Activated CD4-positive, alpha-beta memory T cell treated with anti-CD3 and anti-CD28 coated beads for 36 hours (primary cell): ENCODE measurements at regions of chr1 and their contacts with region 1.

Region 1: GRCh38 chr1:36576118-36576517 is 93.4 kb upstream of the CSF3R start:
- DNase-seq: peak; percentile 65
- H3K4me3 Mint-ChIP-seq: no peak overlapping the region
- H3K27ac Mint-ChIP-seq: no peak overlapping the region
- H3K4me1 Mint-ChIP-seq: no peaks in the 10 kb centered on the region
- H3K27me3 Mint-ChIP-seq: peaks cover 24% of the 10 kb centered on the region

Region 2: GRCh38 chr1:35788139-35788538 is 788.0 kb before region 1 on chr1:
- CTCF ChIA-PET with region 1: no interaction called
- POLR2A ChIA-PET with region 1: no interaction called
- intact Hi-C with region 1: no loop called
- DNase-seq: no peak
- H3K4me3 Mint-ChIP-seq: no peak overlapping the region
- H3K27ac Mint-ChIP-seq: no peak overlapping the region
- H3K4me1 Mint-ChIP-seq: no peaks in the 10 kb centered on the region
- H3K27me3 Mint-ChIP-seq: no peaks in the 10 kb centered on the region

Region 3: GRCh38 chr1:36650200-36651065 is 74.3 kb after region 1 on chr1:
- CTCF ChIA-PET with region 1: interaction called, 10 read pairs
- POLR2A ChIA-PET with region 1: no interaction called
- intact Hi-C with region 1: no loop called
- DNase-seq: peak; percentile 79
- H3K4me3 Mint-ChIP-seq: no peak overlapping the region
- H3K27ac Mint-ChIP-seq: no peak overlapping the region
- H3K4me1 Mint-ChIP-seq: no peaks in the 10 kb centered on the region
- H3K27me3 Mint-ChIP-seq: peaks cover 29% of the 10 kb centered on the region